Transverse colon (tissue), 4 donors: ENCODE measurements at regions of chr12 and their contacts with region 1.

Region 1: GRCh38 chr12:3641428-3642018 is 111.4 kb downstream of the CRACR2A start:
- DNase-seq: no peak
- H3K4me3 ChIP-seq: no peak overlapping the region
- H3K27ac ChIP-seq: no peak overlapping the region
- H3K4me1 ChIP-seq: no peaks in the 10 kb centered on the region
- H3K27me3 ChIP-seq: no peaks in the 10 kb centered on the region
- CTCF ChIP-seq: no peak
- EP300 ChIP-seq: no peak
- POLR2A ChIP-seq: no peak

Region 2: DNA sequence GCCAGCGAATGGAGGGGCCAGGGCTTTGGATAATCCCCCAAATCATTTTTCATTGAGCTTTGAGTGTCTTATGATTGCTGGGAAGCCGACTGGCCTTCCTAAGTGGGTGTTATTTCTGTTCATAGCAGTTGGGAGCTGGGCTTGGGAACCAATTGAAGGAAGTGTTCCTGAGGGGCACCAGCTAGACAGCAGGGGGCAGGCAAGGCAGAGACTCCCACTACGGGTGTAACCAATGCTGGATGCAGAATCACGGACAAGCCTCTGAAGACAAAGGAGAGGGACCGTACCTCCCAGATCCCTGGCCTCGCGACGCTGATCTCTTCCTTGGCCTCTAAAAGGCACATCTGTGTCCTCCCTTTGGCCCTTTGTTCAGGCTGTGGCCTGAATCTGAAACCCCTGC is 299.5 kb before region 1 on chr12:
- in situ Hi-C with region 1: loop called in 1 of 4 experiments (anchors 25 kb)
- intact Hi-C with region 1: no loop called
- DNase-seq: no peak
- H3K4me3 ChIP-seq: no peak overlapping the region
- H3K27ac ChIP-seq: no peak overlapping the region
- H3K4me1 ChIP-seq: no peaks in the 10 kb centered on the region
- H3K27me3 ChIP-seq: peaks cover 2% of the 10 kb centered on the region
- CTCF ChIP-seq: peak in 4 of 5 experiments; percentile 16 to 36 (median 22)
- EP300 ChIP-seq: no peak
- POLR2A ChIP-seq: no peak